CD8-positive, alpha-beta T cell (primary cell): ENCODE measurements at regions of chr1 and their contacts with region 1.

Region 1: GRCh38 chr1:33295450-33296081 is 25.3 kb downstream of the A3GALT2 start:
- DNase-seq: peak; percentile 72 to 96 (median 86)
- ATAC-seq: peak; percentile 96
- H3K4me3 ChIP-seq: no peak overlapping the region
- H3K4me3 Mint-ChIP-seq: no peak overlapping the region
- H3K27ac ChIP-seq: no peak overlapping the region
- H3K27ac Mint-ChIP-seq: no peak overlapping the region
- H3K4me1 ChIP-seq: no peaks in the 10 kb centered on the region
- H3K4me1 Mint-ChIP-seq: peaks cover 9% of the 10 kb centered on the region
- H3K27me3 ChIP-seq: no peaks in the 10 kb centered on the region
- H3K27me3 Mint-ChIP-seq: no peaks in the 10 kb centered on the region
- CTCF ChIP-seq: peak; percentile 93

Region 2: GRCh38 chr1:33276573-33277288 is 18.8 kb before region 1 on chr1:
- CTCF ChIA-PET with region 1: interaction called, 13 read pairs
- POLR2A ChIA-PET with region 1: no interaction called
- intact Hi-C with region 1: no loop called
- DNase-seq: no peak
- ATAC-seq: no peak
- H3K4me3 ChIP-seq: no peak overlapping the region
- H3K4me3 Mint-ChIP-seq: no peak overlapping the region
- H3K27ac ChIP-seq: no peak overlapping the region
- H3K27ac Mint-ChIP-seq: no peak overlapping the region
- H3K4me1 ChIP-seq: peaks cover 24% of the 10 kb centered on the region
- H3K4me1 Mint-ChIP-seq: peaks cover 24% of the 10 kb centered on the region
- H3K27me3 ChIP-seq: no peaks in the 10 kb centered on the region
- H3K27me3 Mint-ChIP-seq: no peaks in the 10 kb centered on the region
- CTCF ChIP-seq: no peak

Region 3: GRCh38 chr1:33306648-33307493 is 11.3 kb after region 1 on chr1:
- CTCF ChIA-PET with region 1: interaction called, 16 read pairs
- POLR2A ChIA-PET with region 1: no interaction called
- intact Hi-C with region 1: no loop called
- DNase-seq: peak in 1 of 9 experiments; percentile 33
- ATAC-seq: no peak
- H3K4me3 ChIP-seq: no peak overlapping the region
- H3K4me3 Mint-ChIP-seq: no peak overlapping the region
- H3K27ac ChIP-seq: no peak overlapping the region
- H3K27ac Mint-ChIP-seq: no peak overlapping the region
- H3K4me1 ChIP-seq: peaks cover 17% of the 10 kb centered on the region
- H3K4me1 Mint-ChIP-seq: peaks cover 16% of the 10 kb centered on the region
- H3K27me3 ChIP-seq: no peaks in the 10 kb centered on the region
- H3K27me3 Mint-ChIP-seq: peaks cover 12% of the 10 kb centered on the region
- CTCF ChIP-seq: no peak

Region 4: DNA sequence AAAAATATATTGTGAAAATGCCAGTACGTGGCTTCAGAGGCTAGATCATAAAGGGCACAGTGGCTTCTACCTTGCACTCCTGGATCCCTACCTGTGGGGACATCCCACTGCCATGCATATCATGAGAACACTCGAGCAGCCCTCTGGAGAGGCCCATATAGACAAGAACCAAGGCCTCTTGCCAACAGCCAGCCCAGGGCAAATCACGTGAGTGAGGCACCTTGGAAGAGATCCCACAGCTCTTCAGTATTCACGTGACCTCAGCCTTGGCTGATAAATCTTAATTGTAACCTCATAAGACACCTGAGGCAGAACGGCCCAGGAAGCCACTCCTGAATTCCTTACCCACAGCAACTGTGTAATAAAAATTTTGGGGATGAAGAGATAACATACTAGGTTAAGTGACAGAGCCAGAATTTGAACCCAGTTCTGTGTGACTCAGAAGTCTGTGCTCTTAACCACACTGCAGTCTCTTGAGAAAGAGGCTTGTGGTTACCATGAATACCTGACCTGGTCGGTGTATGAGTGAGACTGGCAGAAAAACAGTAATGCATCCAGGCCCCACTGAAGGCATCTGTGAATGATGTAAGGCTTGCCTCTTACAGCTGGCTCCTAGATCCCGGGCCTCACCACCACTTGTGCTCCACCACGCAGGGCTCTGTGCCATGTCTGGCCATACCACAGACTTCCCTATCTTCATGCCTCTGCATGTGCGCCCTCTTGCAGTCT is 32.2 kb after region 1 on chr1:
- CTCF ChIA-PET with region 1: interaction called, 12 read pairs
- POLR2A ChIA-PET with region 1: no interaction called
- intact Hi-C with region 1: no loop called
- DNase-seq: no peak
- ATAC-seq: no peak
- H3K4me3 ChIP-seq: no peak overlapping the region
- H3K4me3 Mint-ChIP-seq: no peak overlapping the region
- H3K27ac ChIP-seq: no peak overlapping the region
- H3K27ac Mint-ChIP-seq: no peak overlapping the region
- H3K4me1 ChIP-seq: no peaks in the 10 kb centered on the region
- H3K4me1 Mint-ChIP-seq: no peaks in the 10 kb centered on the region
- H3K27me3 ChIP-seq: no peaks in the 10 kb centered on the region
- H3K27me3 Mint-ChIP-seq: no peaks in the 10 kb centered on the region
- CTCF ChIP-seq: no peak

Region 5: GRCh38 chr1:33361532-33362235 is 66.1 kb after region 1 on chr1:
- CTCF ChIA-PET with region 1: interaction called, 127 read pairs
- POLR2A ChIA-PET with region 1: no interaction called
- intact Hi-C with region 1: no loop called
- DNase-seq: no peak
- ATAC-seq: no peak
- H3K4me3 ChIP-seq: no peak overlapping the region
- H3K4me3 Mint-ChIP-seq: no peak overlapping the region
- H3K27ac ChIP-seq: no peak overlapping the region
- H3K27ac Mint-ChIP-seq: no peak overlapping the region
- H3K4me1 ChIP-seq: no peaks in the 10 kb centered on the region
- H3K4me1 Mint-ChIP-seq: no peaks in the 10 kb centered on the region
- H3K27me3 ChIP-seq: no peaks in the 10 kb centered on the region
- H3K27me3 Mint-ChIP-seq: no peaks in the 10 kb centered on the region
- CTCF ChIP-seq: no peak

Region 6: DNA sequence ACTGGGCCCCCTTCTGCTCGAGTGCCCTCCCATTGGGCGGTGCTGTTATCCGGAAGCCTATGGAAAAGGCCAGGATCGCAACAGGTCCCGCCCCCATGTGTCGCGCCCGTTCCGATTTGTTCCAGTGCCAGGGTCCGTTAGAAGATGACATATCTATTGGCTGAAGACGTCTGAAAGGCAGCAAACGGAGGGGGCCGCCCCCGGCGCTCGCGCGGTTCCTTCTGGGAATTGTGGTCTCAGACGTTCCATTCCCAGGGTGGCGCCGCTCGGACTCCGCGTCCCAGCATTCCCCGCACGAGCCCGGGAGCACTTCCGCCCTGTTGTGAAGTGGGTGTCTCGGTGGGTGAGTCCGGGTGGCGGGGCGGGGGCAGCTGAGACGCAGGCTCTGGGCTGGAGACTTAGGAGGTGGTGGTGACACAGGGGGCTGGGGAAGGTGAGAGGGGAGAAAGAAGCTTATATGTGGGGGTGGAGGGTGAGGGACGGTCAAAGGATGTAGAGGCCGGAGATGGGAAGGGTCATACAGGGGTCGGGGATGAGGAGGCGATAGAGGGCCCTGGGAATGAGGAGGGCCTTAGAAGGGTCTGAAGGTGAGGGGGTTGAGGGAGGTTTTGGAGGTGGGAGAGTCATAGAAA is 176.9 kb after region 1 on chr1 and contains the start of gene ZSCAN20:
- CTCF ChIA-PET with region 1: interaction called, 30 read pairs
- POLR2A ChIA-PET with region 1: no interaction called
- intact Hi-C with region 1: loop called (anchors 1 kb)
- DNase-seq: peak; percentile 59 to 92 (median 84)
- ATAC-seq: peak; percentile 98
- H3K4me3 ChIP-seq: peak within 1 kb of the TSS; percentile 29 to 49
- H3K4me3 Mint-ChIP-seq: peak within 1 kb of the TSS; percentile 87
- H3K27ac ChIP-seq: peak within 1 kb of the TSS in 1 of 2 experiments; percentile 67
- H3K27ac Mint-ChIP-seq: peak within 1 kb of the TSS; percentile 80
- H3K4me1 ChIP-seq: peaks cover 10% of the 10 kb centered on the region
- H3K4me1 Mint-ChIP-seq: peaks cover 31% of the 10 kb centered on the region
- H3K27me3 ChIP-seq: no peaks in the 10 kb centered on the region
- H3K27me3 Mint-ChIP-seq: no peaks in the 10 kb centered on the region
- CTCF ChIP-seq: no peak
- total RNA-seq, gene ZSCAN20: 0.19 TPM